Transverse colon (tissue), 4 donors: ENCODE measurements at regions of chr9 and their contacts with region 1.

Region 1: DNA sequence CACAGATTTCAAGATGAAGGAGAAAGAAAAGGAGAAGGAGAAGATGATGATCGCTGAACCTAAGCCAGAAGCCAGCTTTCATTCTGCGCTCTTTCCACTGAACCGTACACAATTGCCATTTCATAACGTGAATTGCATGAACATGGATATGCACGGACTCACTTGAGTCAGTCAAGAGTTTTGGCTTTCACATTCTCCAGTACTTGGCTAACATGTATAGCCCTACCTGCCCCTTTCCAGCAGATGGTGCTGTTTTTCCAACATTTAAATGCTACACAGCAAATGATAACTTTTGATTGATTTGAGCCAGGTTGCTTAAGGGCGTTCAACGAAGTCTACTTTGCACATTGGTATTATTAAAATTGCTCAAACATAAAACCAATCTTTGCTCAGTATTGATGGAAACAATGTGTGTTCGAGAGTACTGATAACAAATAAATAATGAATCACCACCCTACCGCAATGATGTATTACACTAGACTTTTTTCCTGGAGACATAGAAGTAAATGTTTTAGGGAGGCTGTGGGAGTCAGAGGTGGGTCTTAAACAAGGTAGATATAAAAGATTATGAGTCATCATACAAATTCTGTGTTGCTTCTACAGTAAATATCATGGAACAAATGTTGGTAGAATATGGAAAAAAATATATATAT is 196.4 kb downstream of the TRPM3 start:
- DNase-seq: peak; percentile 27
- H3K4me3 ChIP-seq: no peak overlapping the region
- H3K27ac ChIP-seq: no peak overlapping the region
- H3K4me1 ChIP-seq: no peaks in the 10 kb centered on the region
- H3K27me3 ChIP-seq: no peaks in the 10 kb centered on the region
- CTCF ChIP-seq: peak; percentile 57 to 73 (median 65)
- EP300 ChIP-seq: no peak
- POLR2A ChIP-seq: no peak

Region 2: DNA sequence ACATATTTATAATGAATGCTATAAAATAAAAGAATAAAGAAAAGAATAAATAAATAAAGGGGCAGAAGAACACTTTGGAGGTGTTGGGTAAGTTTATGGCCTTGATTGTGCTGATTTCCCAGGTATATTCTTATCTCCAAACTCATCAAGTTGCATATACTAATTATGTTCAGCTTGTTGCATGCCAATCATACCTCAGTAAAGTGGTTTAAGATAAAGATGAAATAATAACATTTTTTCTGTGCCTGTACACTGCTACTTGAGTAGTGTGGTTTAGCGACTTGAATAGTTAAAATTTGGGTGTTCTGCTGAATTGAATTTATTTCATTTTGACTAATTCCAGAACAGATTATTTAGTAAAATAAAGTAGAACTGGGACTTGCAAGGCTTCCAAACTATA is 74.6 kb before region 1 on chr9:
- in situ Hi-C with region 1: no loop called
- intact Hi-C with region 1: no loop called
- DNase-seq: no peak
- H3K4me3 ChIP-seq: no peak overlapping the region
- H3K27ac ChIP-seq: no peak overlapping the region
- H3K4me1 ChIP-seq: no peaks in the 10 kb centered on the region
- H3K27me3 ChIP-seq: no peaks in the 10 kb centered on the region
- CTCF ChIP-seq: no peak
- EP300 ChIP-seq: no peak
- POLR2A ChIP-seq: no peak

Region 3: GRCh38 chr9:70962664-70963435 is 37.8 kb after region 1 on chr9:
- in situ Hi-C with region 1: no loop called
- intact Hi-C with region 1: loop called (anchors 1 kb)
- DNase-seq: no peak
- H3K4me3 ChIP-seq: no peak overlapping the region
- H3K27ac ChIP-seq: no peak overlapping the region
- H3K4me1 ChIP-seq: no peaks in the 10 kb centered on the region
- H3K27me3 ChIP-seq: no peaks in the 10 kb centered on the region
- CTCF ChIP-seq: no peak
- EP300 ChIP-seq: no peak
- POLR2A ChIP-seq: no peak

Region 4: GRCh38 chr9:71249729-71250317 is 324.8 kb after region 1 on chr9:
- in situ Hi-C with region 1: loop called in 1 of 4 experiments (anchors 25 kb)
- intact Hi-C with region 1: no loop called
- DNase-seq: no peak
- H3K4me3 ChIP-seq: no peak overlapping the region
- H3K27ac ChIP-seq: no peak overlapping the region
- H3K4me1 ChIP-seq: no peaks in the 10 kb centered on the region
- H3K27me3 ChIP-seq: no peaks in the 10 kb centered on the region
- CTCF ChIP-seq: peak; percentile 51 to 75 (median 63)
- EP300 ChIP-seq: no peak
- POLR2A ChIP-seq: no peak